ENCODE measurements at regions of chr20 and their contacts with region 1.

Region 1: GRCh38 chr20:543369-544152 is at the start of gene CSNK2A1:
- DNase-seq: peak; percentile 95
- ATAC-seq: peak; percentile 98 to 99 (median 99)
- H3K4me3 ChIP-seq: peak within 1 kb of the TSS; percentile 81 to 99 (median 96)
- H3K27ac ChIP-seq: peak within 1 kb of the TSS; percentile 87 to 98 (median 94)
- H3K4me1 ChIP-seq: peaks cover 8 to 54% (median 40%) of the 10 kb centered on the region in 9 donors
- H3K27me3 ChIP-seq: no peaks in the 10 kb centered on the region
- CTCF ChIP-seq: no peak
- total RNA-seq, gene CSNK2A1: 111 to 137 (median 129) TPM

Region 2: DNA sequence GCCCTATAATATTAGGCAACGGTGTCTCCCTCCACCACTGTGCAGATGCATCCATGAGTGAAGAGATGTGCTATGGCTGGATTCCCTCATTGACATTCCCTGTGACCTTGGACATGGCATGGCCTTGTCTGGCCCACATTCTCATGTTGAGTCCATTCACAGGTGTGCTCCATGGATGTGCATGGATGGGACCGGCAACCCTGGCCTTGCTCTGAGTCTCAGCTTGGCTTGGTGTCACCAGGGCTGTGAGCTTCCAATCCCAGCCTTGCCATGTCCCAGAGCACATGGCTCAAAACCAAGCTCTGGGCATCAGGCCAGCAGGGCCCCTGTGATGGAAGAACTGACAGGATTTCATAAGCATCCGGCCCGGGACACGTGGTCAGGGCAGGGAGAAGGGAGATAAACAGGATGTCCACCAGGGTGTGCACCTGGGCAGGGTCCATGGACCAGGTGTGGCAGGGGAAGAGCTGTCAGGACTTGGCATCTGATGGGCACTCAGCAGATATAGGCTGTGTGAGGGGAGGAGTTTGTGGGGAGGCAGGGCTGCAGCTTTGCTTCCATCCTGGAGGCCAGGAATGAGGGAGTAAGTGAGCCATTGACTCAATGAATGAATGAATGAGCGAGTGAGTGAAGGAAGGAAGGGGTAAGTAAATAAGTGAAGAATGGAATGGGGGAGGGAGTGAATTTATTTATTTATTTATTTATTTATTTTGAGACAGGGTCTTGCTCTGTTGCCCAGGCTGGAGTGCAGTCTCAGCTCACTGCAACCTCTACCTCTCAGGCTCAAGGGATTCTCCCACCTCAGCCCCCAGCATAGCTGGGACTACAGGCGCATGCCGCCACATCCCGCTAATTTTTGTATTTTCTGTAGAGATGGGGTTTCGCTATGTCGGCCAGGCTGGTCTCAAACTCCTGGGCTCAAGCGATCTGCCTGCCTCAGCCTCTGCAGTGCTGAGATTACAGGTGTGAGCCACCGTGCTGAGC is 181.0 kb before region 1 on chr20:
- intact Hi-C with region 1: loop called in 1 of 10 experiments (anchors 5 kb)
- DNase-seq: peak; percentile 85 to 86
- ATAC-seq: peak; percentile 85 to 97 (median 92)
- H3K4me3 ChIP-seq: no peak overlapping the region
- H3K27ac ChIP-seq: no peak overlapping the region
- H3K4me1 ChIP-seq: peaks cover 0 to 10% (median 7%) of the 10 kb centered on the region in 9 donors
- H3K27me3 ChIP-seq: no peaks in the 10 kb centered on the region
- CTCF ChIP-seq: peak in 8 of 9 donors; percentile 13 to 60 (median 49)